Natural killer cell (primary cell): ENCODE measurements at regions of chr3 and their contacts with region 1.

Region 1: DNA sequence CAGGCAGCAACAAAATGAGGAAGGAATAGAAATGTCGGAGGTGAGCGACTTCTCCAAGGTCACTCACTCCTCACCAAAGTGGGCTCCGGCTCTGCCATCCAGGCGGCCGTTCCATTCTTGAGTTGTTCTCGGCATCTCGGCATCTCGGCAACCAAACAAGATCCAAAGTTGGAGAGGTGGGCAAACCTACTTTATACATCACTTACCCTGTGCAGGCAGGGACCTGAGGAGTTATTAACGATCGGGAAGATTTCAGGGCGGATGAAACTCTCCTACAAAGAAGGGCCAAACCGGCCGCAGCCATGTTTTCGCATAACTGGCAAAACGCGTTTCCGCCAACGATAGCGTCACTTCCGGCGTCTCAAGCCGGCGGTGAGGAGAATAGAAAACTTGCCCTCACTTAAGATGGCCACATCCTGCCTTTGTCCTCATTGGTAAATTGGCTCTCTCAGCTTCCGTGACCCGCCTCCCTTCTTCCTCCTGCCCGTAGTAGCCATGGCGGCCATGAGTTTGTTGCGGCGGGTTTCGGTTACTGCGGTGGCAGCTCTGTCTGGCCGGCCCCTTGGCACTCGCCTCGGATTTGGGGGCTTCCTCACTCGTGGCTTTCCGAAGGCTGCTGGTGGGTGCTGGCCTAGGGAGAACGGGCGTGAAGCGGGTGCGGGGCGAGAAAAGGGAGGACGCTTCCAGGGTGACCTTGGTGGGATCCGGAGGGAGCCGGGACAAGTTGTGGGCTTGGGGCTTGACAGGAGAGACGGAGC is at the starts of genes MRPL47 and NDUFB5:
- DNase-seq: peak; percentile 86 to 98
- ATAC-seq: peak; percentile 99 to 100 (median 99)
- H3K4me3 ChIP-seq: peak within 1 kb of the TSS; percentile 60
- H3K4me3 Mint-ChIP-seq: peak within 1 kb of the TSS; percentile 100
- H3K27ac ChIP-seq: peak within 1 kb of the TSS; percentile 81
- H3K27ac Mint-ChIP-seq: peak within 1 kb of the TSS; percentile 99 to 100
- H3K4me1 ChIP-seq: peaks cover 22% of the 10 kb centered on the region
- H3K4me1 Mint-ChIP-seq: peaks cover 20 to 41% of the 10 kb centered on the region in 2 donors
- H3K27me3 ChIP-seq: no peaks in the 10 kb centered on the region
- H3K27me3 Mint-ChIP-seq: no peaks in the 10 kb centered on the region
- CTCF ChIP-seq: no peak
- total RNA-seq, gene MRPL47: 23.2 to 30.8 (median 25.5) TPM
- total RNA-seq, gene NDUFB5: 19.0 to 25.4 (median 23.9) TPM

Region 2: DNA sequence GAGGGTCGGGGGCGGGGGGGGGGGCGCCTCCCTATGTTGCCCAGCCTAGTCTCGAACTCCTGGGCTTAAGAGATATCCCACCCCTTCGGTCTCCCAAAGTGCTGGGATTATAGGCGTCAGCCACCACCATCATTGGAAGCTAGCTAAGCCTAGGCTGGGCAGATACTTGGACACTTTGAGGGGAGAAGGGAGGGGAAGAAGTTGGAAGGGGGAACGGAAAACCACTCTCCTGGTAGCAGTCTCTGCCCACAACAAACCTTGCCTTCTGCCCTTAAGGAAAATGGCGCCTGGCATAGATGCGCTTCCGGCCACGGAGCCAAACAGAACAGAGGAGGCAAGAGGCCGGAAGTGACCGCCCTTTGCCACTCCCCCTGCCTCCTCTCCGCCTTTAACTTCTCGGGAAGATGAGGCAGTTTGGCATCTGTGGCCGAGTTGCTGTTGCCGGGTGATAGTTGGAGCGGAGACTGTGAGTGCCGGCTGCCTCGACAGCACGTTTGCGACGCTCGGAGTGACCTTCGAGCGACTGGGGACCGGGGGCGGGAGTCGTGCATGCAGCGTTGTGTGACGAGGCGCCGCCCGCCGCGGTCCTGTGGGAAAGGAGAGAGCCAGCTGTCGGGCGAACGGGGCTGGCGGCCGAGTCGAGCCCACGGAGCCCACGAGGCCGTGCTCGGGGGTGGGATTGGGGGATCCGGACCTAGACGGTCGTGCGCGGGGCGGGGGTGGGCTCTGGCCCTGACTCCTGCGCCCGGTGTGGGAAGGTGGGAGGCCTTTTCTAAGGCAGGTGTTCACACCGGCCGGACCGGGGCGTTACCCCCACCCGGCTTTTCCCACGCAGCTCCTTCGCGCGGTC is 256.9 kb before region 1 on chr3 and contains the start of gene MFN1:
- intact Hi-C with region 1: loop called (anchors 1 kb)
- DNase-seq: peak; percentile 81 to 95
- ATAC-seq: peak; percentile 98 to 99 (median 99)
- H3K4me3 ChIP-seq: peak within 1 kb of the TSS; percentile 90
- H3K4me3 Mint-ChIP-seq: peak within 1 kb of the TSS; percentile 95
- H3K27ac ChIP-seq: peak within 1 kb of the TSS; percentile 66
- H3K27ac Mint-ChIP-seq: peak within 1 kb of the TSS; percentile 90 to 98
- H3K4me1 ChIP-seq: peaks cover 10% of the 10 kb centered on the region
- H3K4me1 Mint-ChIP-seq: peaks cover 17 to 18% of the 10 kb centered on the region in 2 donors
- H3K27me3 ChIP-seq: no peaks in the 10 kb centered on the region
- H3K27me3 Mint-ChIP-seq: no peaks in the 10 kb centered on the region
- CTCF ChIP-seq: no peak
- total RNA-seq, gene MFN1: 42.4 to 52.9 (median 47.2) TPM

Region 3: GRCh38 chr3:179526989-179527391 is 77.5 kb before region 1 on chr3:
- intact Hi-C with region 1: no loop called
- DNase-seq: no peak
- ATAC-seq: no peak
- H3K4me3 ChIP-seq: no peak overlapping the region
- H3K4me3 Mint-ChIP-seq: no peak overlapping the region
- H3K27ac ChIP-seq: no peak overlapping the region
- H3K27ac Mint-ChIP-seq: no peak overlapping the region
- H3K4me1 ChIP-seq: no peaks in the 10 kb centered on the region
- H3K4me1 Mint-ChIP-seq: no peaks in the 10 kb centered on the region
- H3K27me3 ChIP-seq: no peaks in the 10 kb centered on the region
- H3K27me3 Mint-ChIP-seq: peaks cover 2 to 10% of the 10 kb centered on the region in 2 donors
- CTCF ChIP-seq: no peak

Region 4: DNA sequence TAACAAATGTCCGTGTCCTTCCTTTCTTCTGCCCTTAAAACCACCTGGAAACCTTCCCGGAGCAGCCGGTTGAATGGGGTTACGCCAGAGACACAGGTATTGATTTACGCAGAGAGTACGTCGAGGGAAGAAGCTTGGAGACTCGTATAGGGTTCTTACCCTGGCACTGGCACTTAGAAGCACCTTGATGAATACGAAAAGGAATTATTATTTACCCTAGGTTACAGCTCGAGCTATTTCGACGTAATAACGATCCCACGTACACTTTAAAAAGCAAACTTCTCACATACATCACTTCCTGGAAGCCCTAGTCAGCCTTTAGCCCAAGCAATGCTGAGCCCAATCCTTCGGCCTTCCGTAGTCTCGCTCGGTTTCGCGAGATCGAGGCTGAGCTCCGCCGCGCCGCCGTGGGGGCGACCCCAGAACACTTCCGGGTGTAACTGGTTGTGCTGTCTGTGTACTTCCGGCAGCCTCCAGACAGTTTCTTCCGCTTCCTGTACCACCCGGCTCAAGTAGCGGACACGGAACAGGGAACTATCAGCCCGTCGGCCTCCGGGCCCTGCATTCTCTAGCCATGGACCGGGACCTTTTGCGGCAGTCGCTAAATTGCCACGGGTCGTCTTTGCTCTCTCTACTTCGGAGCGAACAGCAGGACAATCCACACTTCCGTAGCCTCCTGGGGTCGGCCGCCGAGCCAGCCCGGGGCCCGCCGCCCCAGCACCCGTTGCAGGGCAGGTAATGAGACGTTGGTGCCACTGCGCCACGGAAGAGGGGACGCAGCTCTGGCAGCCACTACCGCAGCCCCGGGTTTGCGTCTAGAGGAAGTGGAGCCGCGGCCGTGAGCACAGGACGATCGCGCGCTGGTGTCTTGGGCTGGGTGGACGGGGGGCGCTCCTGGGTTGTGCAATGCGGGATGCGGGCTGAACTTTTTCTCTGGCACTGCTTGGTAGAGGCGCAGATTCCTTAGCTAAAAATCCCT is 997.5 kb after region 1 on chr3 and contains the start of gene TTC14:
- intact Hi-C with region 1: loop called (anchors 2 kb)
- DNase-seq: peak; percentile 84 to 97
- ATAC-seq: peak; percentile 93 to 98 (median 93)
- H3K4me3 ChIP-seq: peak within 1 kb of the TSS; percentile 60
- H3K4me3 Mint-ChIP-seq: peak within 1 kb of the TSS; percentile 97
- H3K27ac ChIP-seq: peak within 1 kb of the TSS; percentile 90
- H3K27ac Mint-ChIP-seq: peak within 1 kb of the TSS; percentile 97 to 98
- H3K4me1 ChIP-seq: peaks cover 5% of the 10 kb centered on the region
- H3K4me1 Mint-ChIP-seq: peaks cover 23 to 26% of the 10 kb centered on the region in 2 donors
- H3K27me3 ChIP-seq: peaks cover under 1% of the 10 kb centered on the region
- H3K27me3 Mint-ChIP-seq: peaks cover 20 to 29% of the 10 kb centered on the region in 2 donors
- CTCF ChIP-seq: no peak
- total RNA-seq, gene TTC14: 92.9 to 115 (median 112) TPM